ENCODE measurements at regions of chr6 and their contacts with region 1.

Region 1: GRCh38 chr6:84973606-84974005 is 209.2 kb upstream of the TBX18 start:
- DNase-seq: no peak

Region 2: GRCh38 chr6:83696674-83697073 is 1276.9 kb before region 1 on chr6:
- intact Hi-C with region 1: loop called in 1 of 2 experiments (anchors 5 kb)
- DNase-seq: no peak

Measured in posterior vena cava (tissue), 2 donors.